ENCODE measurements at regions of chrX and their contacts with region 1.

Region 1: GRCh38 chrX:10482261-10482660 is 138.1 kb downstream of the MID1 start:
- DNase-seq: peak; percentile 55
- H3K4me3 ChIP-seq: no peak overlapping the region
- H3K27ac ChIP-seq: peak overlapping the region; percentile 97
- H3K4me1 ChIP-seq: peaks cover 25% of the 10 kb centered on the region
- H3K27me3 ChIP-seq: no peaks in the 10 kb centered on the region
- CTCF ChIP-seq: no peak
- POLR2A ChIP-seq: no peak

Region 2: GRCh38 chrX:10450229-10450958 is 31.9 kb before region 1 on chrX:
- CTCF ChIA-PET with region 1: no interaction called
- POLR2A ChIA-PET with region 1: no interaction called
- dilution Hi-C with region 1: no loop called
- intact Hi-C with region 1: loop called (anchors 2 kb)
- DNase-seq: peak; percentile 28
- H3K4me3 ChIP-seq: no peak overlapping the region
- H3K27ac ChIP-seq: peak overlapping the region; percentile 48
- H3K4me1 ChIP-seq: peaks cover 11% of the 10 kb centered on the region
- H3K27me3 ChIP-seq: no peaks in the 10 kb centered on the region
- CTCF ChIP-seq: no peak
- POLR2A ChIP-seq: no peak

Region 3: DNA sequence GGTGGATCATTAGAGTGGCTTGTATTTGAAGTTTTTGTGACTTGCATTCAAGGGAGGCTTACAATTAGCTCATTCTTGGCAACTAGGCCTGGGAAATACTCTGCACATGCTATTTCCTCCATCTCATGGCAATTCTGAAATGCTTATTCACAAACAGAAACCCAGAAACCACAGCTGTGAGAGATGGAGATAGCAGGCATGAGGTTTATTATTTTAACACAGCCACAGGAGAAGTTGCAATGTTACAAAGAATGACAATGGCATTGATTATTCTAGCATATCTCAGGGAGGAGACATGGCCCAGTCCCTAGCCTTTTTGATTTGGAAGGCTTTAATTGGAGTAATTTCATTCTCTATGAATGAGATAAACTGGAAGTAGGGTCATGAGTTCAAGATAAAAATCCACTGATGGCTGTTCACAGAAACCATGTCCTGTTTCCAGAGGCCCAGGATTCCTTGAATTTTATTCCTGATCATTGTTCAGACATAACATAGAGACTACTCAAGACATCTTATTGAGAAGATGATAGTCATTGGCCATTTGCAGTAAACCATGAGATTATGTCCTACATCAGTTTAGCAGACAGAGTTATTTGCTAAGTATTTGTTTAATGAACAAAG is 14.2 kb after region 1 on chrX:
- CTCF ChIA-PET with region 1: interaction called, 3 read pairs
- POLR2A ChIA-PET with region 1: no interaction called
- dilution Hi-C with region 1: no loop called
- intact Hi-C with region 1: loop called (anchors 1 kb)
- DNase-seq: peak; percentile 91
- H3K4me3 ChIP-seq: no peak overlapping the region
- H3K27ac ChIP-seq: peak overlapping the region; percentile 84
- H3K4me1 ChIP-seq: peaks cover 15% of the 10 kb centered on the region
- H3K27me3 ChIP-seq: no peaks in the 10 kb centered on the region
- CTCF ChIP-seq: no peak
- POLR2A ChIP-seq: no peak

Region 4: GRCh38 chrX:10579112-10580011 is 97.1 kb after region 1 on chrX:
- CTCF ChIA-PET with region 1: interaction called, 4 read pairs
- POLR2A ChIA-PET with region 1: no interaction called
- dilution Hi-C with region 1: no loop called
- intact Hi-C with region 1: loop called (anchors 1 kb)
- DNase-seq: peak; percentile 84
- H3K4me3 ChIP-seq: peak overlapping the region in 1 of 3 experiments; percentile 59
- H3K27ac ChIP-seq: peak overlapping the region; percentile 99
- H3K4me1 ChIP-seq: peaks cover 58% of the 10 kb centered on the region
- H3K27me3 ChIP-seq: no peaks in the 10 kb centered on the region
- CTCF ChIP-seq: no peak
- POLR2A ChIP-seq: no peak